Caco-2 (cell line): ENCODE measurements at regions of chr11 and their contacts with region 1.

Region 1: DNA sequence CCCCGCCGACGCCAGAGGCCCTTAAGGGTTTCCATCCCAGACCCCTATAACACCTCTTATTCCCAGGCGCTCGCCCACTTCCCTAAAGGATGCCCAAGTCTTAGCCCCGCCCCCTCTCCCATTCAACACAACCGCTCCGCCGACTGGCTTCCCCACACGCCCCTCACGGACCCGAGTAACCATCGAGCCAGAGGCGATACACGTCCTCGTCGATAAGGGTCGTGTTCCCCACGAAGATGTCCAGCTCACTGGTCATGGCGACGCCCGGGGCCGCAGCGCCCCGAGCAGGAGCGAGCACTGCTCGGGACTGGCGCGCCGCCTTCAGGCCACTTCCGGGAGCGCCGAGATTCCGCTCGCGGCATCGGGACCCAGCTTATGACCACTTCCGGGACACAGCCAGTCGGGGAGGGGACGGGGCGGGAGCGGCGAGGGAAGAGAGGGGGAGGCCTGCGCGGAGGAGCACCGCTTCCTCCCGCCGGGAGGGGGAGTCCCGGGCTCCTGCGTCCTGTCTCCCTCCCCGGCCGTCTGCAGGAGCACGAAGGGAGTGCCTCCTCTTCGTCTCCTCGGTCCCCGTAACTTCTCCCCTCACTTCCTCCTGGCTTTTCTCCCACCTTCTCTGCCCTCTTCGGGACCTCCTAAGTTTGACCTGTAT is at the start of gene FIBP:
- DNase-seq: peak; percentile 98
- H3K4me3 ChIP-seq: peak within 1 kb of the TSS; percentile 68
- H3K4me3 Mint-ChIP-seq: peak within 1 kb of the TSS; percentile 82
- H3K27ac Mint-ChIP-seq: peak within 1 kb of the TSS; percentile 69
- H3K4me1 ChIP-seq: peaks cover 31% of the 10 kb centered on the region
- H3K4me1 Mint-ChIP-seq: peaks cover 33% of the 10 kb centered on the region
- H3K27me3 ChIP-seq: no peaks in the 10 kb centered on the region
- H3K27me3 Mint-ChIP-seq: no peaks in the 10 kb centered on the region
- CTCF ChIP-seq: peak; percentile 76 to 93
- total RNA-seq, gene FIBP: 56.8 and 61.5 TPM in 2 replicates

Region 2: GRCh38 chr11:65711785-65712632 is 176.3 kb before region 1 on chr11 and contains the start of gene KAT5:
- CTCF ChIA-PET with region 1: interaction called, 52 read pairs
- POLR2A ChIA-PET with region 1: interaction called, 8 read pairs
- intact Hi-C with region 1: loop called (anchors 1 kb)
- DNase-seq: peak; percentile 98 to 99
- H3K4me3 ChIP-seq: peak within 1 kb of the TSS; percentile 66
- H3K4me3 Mint-ChIP-seq: peak within 1 kb of the TSS; percentile 83
- H3K27ac Mint-ChIP-seq: peak within 1 kb of the TSS; percentile 98
- H3K4me1 ChIP-seq: peaks cover 21% of the 10 kb centered on the region
- H3K4me1 Mint-ChIP-seq: peaks cover 13% of the 10 kb centered on the region
- H3K27me3 ChIP-seq: no peaks in the 10 kb centered on the region
- H3K27me3 Mint-ChIP-seq: no peaks in the 10 kb centered on the region
- CTCF ChIP-seq: peak; percentile 97 to 98
- total RNA-seq, gene KAT5: 60.2 and 70.1 TPM in 2 replicates

Region 3: GRCh38 chr11:65767406-65767805 is 120.9 kb before region 1 on chr11:
- CTCF ChIA-PET with region 1: no interaction called
- POLR2A ChIA-PET with region 1: no interaction called
- intact Hi-C with region 1: no loop called
- DNase-seq: no peak
- H3K4me3 ChIP-seq: no peak overlapping the region
- H3K4me3 Mint-ChIP-seq: no peak overlapping the region
- H3K27ac Mint-ChIP-seq: no peak overlapping the region
- H3K4me1 ChIP-seq: peaks cover 15% of the 10 kb centered on the region
- H3K4me1 Mint-ChIP-seq: peaks cover 15% of the 10 kb centered on the region
- H3K27me3 ChIP-seq: no peaks in the 10 kb centered on the region
- H3K27me3 Mint-ChIP-seq: no peaks in the 10 kb centered on the region
- CTCF ChIP-seq: no peak

Region 4: DNA sequence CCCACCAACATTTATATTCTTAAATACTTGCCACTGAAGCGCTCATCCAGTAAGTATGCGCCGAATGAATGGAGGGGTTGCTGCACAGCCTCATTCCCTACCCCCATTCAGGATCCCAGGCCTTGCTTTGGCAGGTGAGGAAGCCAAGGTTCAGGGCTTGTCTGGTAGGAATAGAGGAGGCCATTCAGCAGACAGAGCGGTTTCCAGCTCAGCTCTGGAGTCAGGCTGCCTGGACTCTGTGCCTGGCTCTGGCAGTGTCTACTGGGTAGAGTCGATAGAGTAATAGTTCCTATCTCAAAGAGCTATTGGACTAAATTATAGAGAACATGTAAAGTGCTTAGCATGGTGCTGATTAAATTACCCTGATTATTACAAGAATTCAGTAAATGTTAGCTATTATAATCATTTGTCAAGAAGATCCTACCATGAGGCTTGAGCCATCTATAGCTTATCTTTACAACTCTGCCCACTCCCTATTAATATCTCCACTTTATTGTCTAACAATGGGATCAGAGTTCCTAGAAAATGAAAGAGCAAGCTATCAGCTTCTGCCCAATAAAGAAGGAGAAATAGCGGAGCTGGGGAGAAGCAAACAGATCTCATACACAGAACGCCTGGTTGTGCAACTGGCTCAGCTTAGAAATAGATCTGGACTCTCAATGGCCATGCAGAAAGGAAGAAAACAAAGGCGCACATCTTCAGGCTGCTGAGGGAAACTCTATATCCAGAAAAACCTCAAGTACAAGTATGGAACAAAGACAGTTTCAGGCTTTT is 61.1 kb before region 1 on chr11:
- CTCF ChIA-PET with region 1: interaction called, 12 read pairs
- POLR2A ChIA-PET with region 1: no interaction called
- intact Hi-C with region 1: no loop called
- DNase-seq: peak in 1 of 2 experiments; percentile 28
- H3K4me3 ChIP-seq: no peak overlapping the region
- H3K4me3 Mint-ChIP-seq: no peak overlapping the region
- H3K27ac Mint-ChIP-seq: no peak overlapping the region
- H3K4me1 ChIP-seq: peaks cover 13% of the 10 kb centered on the region
- H3K4me1 Mint-ChIP-seq: peaks cover 9% of the 10 kb centered on the region
- H3K27me3 ChIP-seq: no peaks in the 10 kb centered on the region
- H3K27me3 Mint-ChIP-seq: peaks cover 3% of the 10 kb centered on the region
- CTCF ChIP-seq: no peak

Region 5: GRCh38 chr11:65873318-65874156 is 14.8 kb before region 1 on chr11:
- CTCF ChIA-PET with region 1: interaction called, 37 read pairs
- POLR2A ChIA-PET with region 1: interaction called, 6 read pairs
- intact Hi-C with region 1: no loop called
- DNase-seq: peak; percentile 89 to 95
- H3K4me3 ChIP-seq: peak overlapping the region; percentile 53
- H3K4me3 Mint-ChIP-seq: peak overlapping the region; percentile 76
- H3K27ac Mint-ChIP-seq: peak overlapping the region; percentile 77
- H3K4me1 ChIP-seq: 0 out of 2 replicates have a peak, but pooled peaks cover 3% of the 10 kb centered on the region
- H3K4me1 Mint-ChIP-seq: peaks cover 6% of the 10 kb centered on the region
- H3K27me3 ChIP-seq: no peaks in the 10 kb centered on the region
- H3K27me3 Mint-ChIP-seq: no peaks in the 10 kb centered on the region
- CTCF ChIP-seq: no peak

Region 6: GRCh38 chr11:65919146-65920033 is 31.1 kb after region 1 on chr11 and contains the start of gene DRAP1:
- CTCF ChIA-PET with region 1: interaction called, 9 read pairs
- POLR2A ChIA-PET with region 1: interaction called, 5 read pairs
- intact Hi-C with region 1: loop called (anchors 2 kb)
- DNase-seq: peak; percentile 99
- H3K4me3 ChIP-seq: peak within 1 kb of the TSS; percentile 95
- H3K4me3 Mint-ChIP-seq: peak within 1 kb of the TSS; percentile 90
- H3K27ac Mint-ChIP-seq: peak within 1 kb of the TSS; percentile 75
- H3K4me1 ChIP-seq: peaks cover 15% of the 10 kb centered on the region
- H3K4me1 Mint-ChIP-seq: no peaks in the 10 kb centered on the region
- H3K27me3 ChIP-seq: no peaks in the 10 kb centered on the region
- H3K27me3 Mint-ChIP-seq: no peaks in the 10 kb centered on the region
- CTCF ChIP-seq: peak in 1 of 2 experiments; percentile 1
- total RNA-seq, gene DRAP1: 91.0 and 93.1 TPM in 2 replicates

Region 7: GRCh38 chr11:66001942-66002647 is 113.8 kb after region 1 on chr11 and contains the starts of genes BANF1 and EIF1AD:
- CTCF ChIA-PET with region 1: interaction called, 10 read pairs
- POLR2A ChIA-PET with region 1: interaction called, 29 read pairs
- intact Hi-C with region 1: loop called (anchors 1 kb)
- DNase-seq: peak; percentile 96 to 97
- H3K4me3 ChIP-seq: peak within 1 kb of the TSS; percentile 92
- H3K4me3 Mint-ChIP-seq: peak within 1 kb of the TSS; percentile 99
- H3K27ac Mint-ChIP-seq: peak within 1 kb of the TSS; percentile 97
- H3K4me1 ChIP-seq: 0 out of 2 replicates have a peak, but pooled peaks cover 7% of the 10 kb centered on the region
- H3K4me1 Mint-ChIP-seq: no peaks in the 10 kb centered on the region
- H3K27me3 ChIP-seq: no peaks in the 10 kb centered on the region
- H3K27me3 Mint-ChIP-seq: no peaks in the 10 kb centered on the region
- CTCF ChIP-seq: no peak
- total RNA-seq, gene BANF1: 295 and 300 TPM in 2 replicates
- total RNA-seq, gene EIF1AD: 51.2 and 55.3 TPM in 2 replicates

Region 8: GRCh38 chr11:66311965-66312548 is 423.8 kb after region 1 on chr11:
- CTCF ChIA-PET with region 1: interaction called, 4 read pairs
- POLR2A ChIA-PET with region 1: interaction called, 13 read pairs
- intact Hi-C with region 1: no loop called
- DNase-seq: peak; percentile 97
- H3K4me3 ChIP-seq: peak overlapping the region; percentile 52
- H3K4me3 Mint-ChIP-seq: peak overlapping the region; percentile 87
- H3K27ac Mint-ChIP-seq: peak overlapping the region; percentile 91
- H3K4me1 ChIP-seq: peaks cover 14% of the 10 kb centered on the region
- H3K4me1 Mint-ChIP-seq: no peaks in the 10 kb centered on the region
- H3K27me3 ChIP-seq: no peaks in the 10 kb centered on the region
- H3K27me3 Mint-ChIP-seq: no peaks in the 10 kb centered on the region
- CTCF ChIP-seq: peak in 1 of 2 experiments; percentile 88